Left lung (tissue), 14 donors: ENCODE measurements at regions of chr9 and their contacts with region 1.

Region 1: GRCh38 chr9:93682232-93682968 is 106.0 kb downstream of the PHF2 start:
- DNase-seq: peak in 3 of 4 donors; percentile 29 to 85 (median 44)
- ATAC-seq: peak; percentile 88
- H3K4me3 ChIP-seq: no peak overlapping the region
- H3K27ac ChIP-seq: no peak overlapping the region
- H3K4me1 ChIP-seq: no peaks in the 10 kb centered on the region
- H3K27me3 ChIP-seq: no peaks in the 10 kb centered on the region
- CTCF ChIP-seq: peak; percentile 58 to 71

Region 2: DNA sequence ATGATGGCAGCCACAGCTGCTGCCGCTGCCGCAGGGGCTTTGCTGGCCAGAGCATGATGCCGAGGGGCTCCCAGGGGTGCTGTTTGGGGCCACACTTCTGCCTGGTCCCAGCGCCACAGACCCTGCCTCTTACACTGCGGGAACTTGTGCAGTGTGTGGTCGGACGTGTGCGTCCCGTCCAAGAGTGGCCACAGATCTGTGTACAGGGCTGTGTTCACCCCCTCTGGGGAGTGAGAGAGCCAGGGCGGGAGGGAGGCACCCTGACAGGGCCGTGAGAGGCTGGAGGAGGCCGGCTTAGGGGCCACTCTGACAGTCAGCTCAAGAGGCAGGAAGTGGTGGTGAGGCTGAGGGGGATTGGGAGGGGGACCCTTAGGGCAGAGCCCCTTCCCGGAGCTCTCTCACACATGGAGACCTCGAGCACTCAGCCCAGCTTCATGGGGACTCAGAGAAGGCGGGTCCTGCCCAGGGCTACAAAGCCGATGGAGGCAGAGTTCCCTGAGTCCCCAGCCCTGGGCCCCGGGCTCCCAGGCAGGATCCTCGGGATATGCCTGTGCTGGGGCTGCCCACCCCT is 599.5 kb before region 1 on chr9:
- intact Hi-C with region 1: no loop called
- DNase-seq: peak in 3 of 4 donors; percentile 30 to 73 (median 30)
- ATAC-seq: peak; percentile 60
- H3K4me3 ChIP-seq: no peak overlapping the region
- H3K27ac ChIP-seq: no peak overlapping the region
- H3K4me1 ChIP-seq: peaks cover 12 to 15% of the 10 kb centered on the region in 2 donors
- H3K27me3 ChIP-seq: no peaks in the 10 kb centered on the region
- CTCF ChIP-seq: no peak

Region 3: GRCh38 chr9:93962561-93963440 is 280.4 kb after region 1 on chr9:
- intact Hi-C with region 1: loop called in 1 of 2 experiments (anchors 5 kb)
- DNase-seq: peak; percentile 80 to 92 (median 86)
- ATAC-seq: peak; percentile 93
- H3K4me3 ChIP-seq: no peak overlapping the region
- H3K27ac ChIP-seq: no peak overlapping the region
- H3K4me1 ChIP-seq: peaks cover 22 to 39% of the 10 kb centered on the region in 2 donors
- H3K27me3 ChIP-seq: peaks cover 36 to 88% of the 10 kb centered on the region in 2 donors
- CTCF ChIP-seq: peak; percentile 74 to 87